KBM-7 (cell line): ENCODE measurements at regions of chr10 and their contacts with region 1.

Region 1: GRCh38 chr10:58189269-58189668 is 78.4 kb downstream of the IPMK start:
- DNase-seq: peak; percentile 17

Region 2: DNA sequence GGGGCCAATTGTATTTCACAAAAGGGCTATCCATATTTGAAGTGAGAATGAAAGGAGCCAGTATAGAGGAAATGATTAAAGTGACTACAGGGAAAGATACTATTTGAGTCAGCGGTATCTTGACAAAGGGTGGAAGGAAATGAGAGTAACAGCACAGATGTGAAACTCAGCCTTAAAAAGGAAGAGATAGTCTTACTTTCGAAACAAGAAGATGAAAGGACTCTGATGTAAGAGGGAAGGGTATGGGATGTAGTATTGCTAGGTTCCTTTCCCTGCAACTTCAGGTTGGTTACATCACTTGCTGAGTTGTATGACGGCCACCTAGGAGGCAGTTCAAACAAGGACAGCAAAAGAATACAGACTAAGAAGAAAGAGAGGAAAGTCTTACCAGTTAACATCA is 93.3 kb after region 1 on chr10:
- in situ Hi-C with region 1: loop called (anchors 10 kb)
- DNase-seq: no peak

Region 3: GRCh38 chr10:58414270-58415041 is 225.2 kb after region 1 on chr10:
- in situ Hi-C with region 1: no loop called
- DNase-seq: peak; percentile 33